ENCODE measurements at regions of chr3 and their contacts with region 1.

Region 1: GRCh38 chr3:152834776-152835600 is at the start of gene P2RY1:
- DNase-seq: peak; percentile 58
- ATAC-seq: peak; percentile 82
- H3K4me3 ChIP-seq: peak within 1 kb of the TSS; percentile 86
- H3K27ac ChIP-seq: no peak within 1 kb of the TSS
- H3K4me1 ChIP-seq: no peaks in the 10 kb centered on the region
- H3K27me3 ChIP-seq: peaks cover 58% of the 10 kb centered on the region
- CTCF ChIP-seq: peak; percentile 37; the same call in 1 of the 2 replicates
- total RNA-seq, gene P2RY1: 0.29 and 0.81 TPM in 2 replicates

Region 2: DNA sequence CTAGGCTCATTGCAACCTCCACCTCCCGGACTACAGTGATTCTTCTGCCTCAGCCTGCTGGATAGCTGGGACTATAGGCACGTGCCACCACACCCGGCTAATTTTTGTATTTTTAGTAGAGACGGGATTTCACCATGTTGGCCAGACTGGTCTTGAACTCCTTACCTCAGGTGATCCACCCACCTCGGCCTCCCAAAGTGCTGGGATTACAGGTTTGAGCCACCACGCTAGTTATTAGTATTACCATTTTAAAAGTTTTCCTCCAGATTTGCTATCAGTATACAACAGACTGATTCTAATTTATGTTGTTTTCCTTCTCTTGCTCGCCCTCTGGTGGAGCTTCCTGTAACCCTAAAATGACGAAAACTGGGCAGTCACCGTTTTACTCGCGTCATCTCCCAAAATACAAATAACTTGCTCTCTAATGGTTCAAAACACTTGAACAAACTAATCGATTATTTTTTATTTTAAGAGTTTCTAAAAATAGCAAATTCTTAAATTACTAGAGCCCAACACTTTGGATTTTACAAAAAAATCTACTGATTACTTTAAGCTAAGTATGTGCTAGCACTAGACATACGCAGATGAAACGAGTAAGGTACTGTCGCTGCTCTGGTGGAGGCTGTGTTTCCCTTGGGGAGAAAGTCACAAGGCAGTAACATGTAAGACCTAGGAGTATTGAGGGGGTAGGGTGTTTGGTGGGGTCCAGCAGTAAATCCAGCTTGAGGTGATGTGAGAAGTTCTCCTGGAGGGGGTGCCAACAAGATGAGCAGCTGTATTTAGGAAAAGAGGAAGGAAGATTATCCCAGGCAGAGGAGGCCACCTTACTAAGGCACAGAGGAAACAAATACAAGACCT is 362.9 kb before region 1 on chr3:
- CTCF ChIA-PET with region 1: no interaction called
- POLR2A ChIA-PET with region 1: no interaction called
- intact Hi-C with region 1: loop called (anchors 10 kb)
- DNase-seq: peak; percentile 77
- ATAC-seq: peak; percentile 85
- H3K4me3 ChIP-seq: peak overlapping the region; percentile 11; the same call in 1 of the 2 replicates
- H3K27ac ChIP-seq: no peak overlapping the region
- H3K4me1 ChIP-seq: no peaks in the 10 kb centered on the region
- H3K27me3 ChIP-seq: no peaks in the 10 kb centered on the region
- CTCF ChIP-seq: peak; percentile 74

Region 3: DNA sequence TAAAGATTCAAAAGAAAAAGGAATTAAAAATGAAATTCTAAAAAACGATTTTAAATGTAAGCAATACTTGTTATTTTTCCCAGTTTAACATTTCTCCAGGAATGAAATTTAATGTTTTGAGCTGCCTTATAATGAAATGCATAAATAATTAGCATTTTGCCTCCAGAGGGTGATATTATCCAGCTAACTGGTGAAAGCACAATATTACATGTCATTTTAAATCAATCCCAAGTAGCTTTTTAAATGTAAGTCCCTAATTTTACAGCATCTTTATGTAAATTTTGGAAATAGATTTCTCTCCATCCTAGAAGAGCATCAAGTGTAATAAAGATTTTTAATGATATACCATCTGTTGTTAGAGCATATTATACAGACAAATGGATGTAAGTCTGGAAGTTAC is 139.1 kb before region 1 on chr3:
- CTCF ChIA-PET with region 1: interaction called, 3 read pairs
- POLR2A ChIA-PET with region 1: no interaction called
- intact Hi-C with region 1: loop called (anchors 5 kb)
- DNase-seq: no peak
- ATAC-seq: no peak
- H3K4me3 ChIP-seq: no peak overlapping the region
- H3K27ac ChIP-seq: no peak overlapping the region
- H3K4me1 ChIP-seq: no peaks in the 10 kb centered on the region
- H3K27me3 ChIP-seq: no peaks in the 10 kb centered on the region
- CTCF ChIP-seq: no peak

Region 4: GRCh38 chr3:152879130-152879789 is 44.3 kb after region 1 on chr3:
- CTCF ChIA-PET with region 1: no interaction called
- POLR2A ChIA-PET with region 1: interaction called, 8 read pairs
- intact Hi-C with region 1: loop called (anchors 1 kb)
- DNase-seq: no peak
- ATAC-seq: no peak
- H3K4me3 ChIP-seq: no peak overlapping the region
- H3K27ac ChIP-seq: no peak overlapping the region
- H3K4me1 ChIP-seq: 0 out of 2 replicates have a peak, but pooled peaks cover 4% of the 10 kb centered on the region
- H3K27me3 ChIP-seq: no peaks in the 10 kb centered on the region
- CTCF ChIP-seq: no peak

Region 5: DNA sequence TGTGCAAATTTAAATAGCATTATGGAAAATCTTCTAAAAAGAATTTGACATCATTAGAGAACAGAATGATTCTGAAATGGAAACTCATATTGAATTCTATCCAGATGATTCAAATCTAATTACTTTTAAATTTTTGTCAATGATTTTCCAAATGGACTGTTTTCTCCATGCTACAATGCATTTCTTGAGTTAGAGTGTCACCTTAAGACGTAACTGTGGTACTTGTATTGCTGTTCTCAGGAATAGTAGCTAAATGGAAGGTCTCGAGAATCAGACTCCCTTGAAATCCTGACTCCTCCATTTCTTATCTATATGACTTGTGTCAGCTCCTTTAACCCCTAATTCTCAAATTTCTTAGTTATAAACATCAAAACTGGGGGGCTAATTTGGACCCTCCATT is 102.2 kb after region 1 on chr3:
- CTCF ChIA-PET with region 1: no interaction called
- POLR2A ChIA-PET with region 1: no interaction called
- intact Hi-C with region 1: loop called (anchors 5 kb)
- DNase-seq: no peak
- ATAC-seq: no peak
- H3K4me3 ChIP-seq: no peak overlapping the region
- H3K27ac ChIP-seq: no peak overlapping the region
- H3K4me1 ChIP-seq: peaks cover 5% of the 10 kb centered on the region
- H3K27me3 ChIP-seq: no peaks in the 10 kb centered on the region
- CTCF ChIP-seq: peak; percentile 31; the same call in 1 of the 2 replicates

Region 6: DNA sequence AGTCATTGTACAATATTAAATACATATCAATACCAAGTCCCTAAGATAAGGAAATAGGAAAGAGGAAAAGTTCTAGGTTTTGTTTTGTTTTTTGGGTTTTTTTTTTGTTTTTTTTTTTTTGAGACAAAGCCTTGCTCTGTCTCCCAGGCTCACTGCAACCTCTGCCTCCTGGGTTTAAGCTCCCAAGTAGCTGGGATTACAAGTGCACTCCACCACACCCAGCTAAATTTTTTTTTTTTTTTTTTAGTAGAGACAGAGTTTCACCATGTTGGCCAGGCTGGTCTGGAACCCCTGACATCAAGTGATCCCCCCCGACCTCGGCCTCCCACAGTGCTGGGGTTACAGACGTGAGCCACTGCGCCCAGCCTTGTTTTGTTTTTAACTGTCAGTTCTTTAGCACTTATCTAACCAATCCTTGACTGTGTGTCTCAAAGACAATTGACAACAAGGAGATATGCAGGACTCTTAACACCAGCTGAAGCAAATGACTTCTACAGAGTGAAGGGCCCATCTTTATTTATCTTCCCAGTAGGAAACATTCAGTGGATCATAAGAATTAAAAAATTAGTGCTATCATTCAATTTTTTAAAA is 227.0 kb after region 1 on chr3:
- CTCF ChIA-PET with region 1: no interaction called
- POLR2A ChIA-PET with region 1: no interaction called
- intact Hi-C with region 1: no loop called
- DNase-seq: no peak
- ATAC-seq: no peak
- H3K4me3 ChIP-seq: no peak overlapping the region
- H3K27ac ChIP-seq: no peak overlapping the region
- H3K4me1 ChIP-seq: peaks cover 18% of the 10 kb centered on the region
- H3K27me3 ChIP-seq: no peaks in the 10 kb centered on the region
- CTCF ChIP-seq: no peak